ENCODE measurements at regions of chr3 and their contacts with region 1.

Region 1: GRCh38 chr3:42608581-42608980 is 8.1 kb downstream of the NKTR start:
- DNase-seq: no peak
- H3K4me3 ChIP-seq: no peak overlapping the region
- H3K27ac ChIP-seq: no peak overlapping the region
- H3K4me1 ChIP-seq: peaks cover 0 to 73% (median 16%) of the 10 kb centered on the region in 4 donors
- H3K27me3 ChIP-seq: no peaks in the 10 kb centered on the region
- CTCF ChIP-seq: no peak

Region 2: GRCh38 chr3:42387802-42388651 is 220.6 kb before region 1 on chr3:
- intact Hi-C with region 1: no loop called
- DNase-seq: no peak
- H3K4me3 ChIP-seq: no peak overlapping the region
- H3K27ac ChIP-seq: no peak overlapping the region
- H3K4me1 ChIP-seq: no peaks in the 10 kb centered on the region
- H3K27me3 ChIP-seq: no peaks in the 10 kb centered on the region
- CTCF ChIP-seq: no peak

Region 3: GRCh38 chr3:42652611-42653302 is 44.2 kb after region 1 on chr3:
- intact Hi-C with region 1: loop called (anchors 5 kb)
- DNase-seq: peak; percentile 83 to 90
- H3K4me3 ChIP-seq: peak overlapping the region; percentile 89 to 95
- H3K27ac ChIP-seq: peak overlapping the region; percentile 95 to 99
- H3K4me1 ChIP-seq: peaks cover 0 to 83% (median 62%) of the 10 kb centered on the region in 4 donors
- H3K27me3 ChIP-seq: no peaks in the 10 kb centered on the region
- CTCF ChIP-seq: no peak

Region 4: DNA sequence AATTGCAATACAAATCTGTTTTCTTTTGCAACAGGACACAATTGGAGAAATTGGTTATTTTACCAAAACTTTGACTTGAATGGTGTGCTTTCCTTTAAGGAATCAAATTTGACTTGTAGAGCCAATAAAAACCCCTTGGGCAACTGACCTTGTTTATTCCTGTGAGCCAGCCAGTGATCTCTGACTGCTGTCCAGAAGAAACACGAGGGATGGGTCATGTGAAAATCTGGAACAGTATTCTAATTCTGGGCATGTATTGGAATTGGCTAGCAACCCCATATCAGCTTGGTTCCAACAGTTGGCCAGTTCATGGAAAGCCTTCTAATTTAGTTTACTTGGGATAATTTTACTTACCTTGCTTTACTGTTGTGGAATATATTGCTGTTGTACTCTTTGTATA is 113.1 kb after region 1 on chr3:
- intact Hi-C with region 1: no loop called
- DNase-seq: peak; percentile 41 to 73
- H3K4me3 ChIP-seq: no peak overlapping the region
- H3K27ac ChIP-seq: peak overlapping the region; percentile 70 to 71
- H3K4me1 ChIP-seq: peaks cover 0 to 22% (median 5%) of the 10 kb centered on the region in 4 donors
- H3K27me3 ChIP-seq: no peaks in the 10 kb centered on the region
- CTCF ChIP-seq: no peak